ENCODE measurements at regions of chr16 and their contacts with region 1.

Region 1: GRCh38 chr16:7313170-7313569 is 19.5 kb upstream of the RBFOX1 start:
- DNase-seq: no peak
- H3K4me3 ChIP-seq: no peak overlapping the region
- H3K27ac ChIP-seq: no peak overlapping the region
- H3K4me1 ChIP-seq: no peaks in the 10 kb centered on the region
- H3K27me3 ChIP-seq: no peaks in the 10 kb centered on the region
- CTCF ChIP-seq: peak in 2 of 3 experiments; percentile 11 to 50; a peak in 2 of 4 replicates
- EP300 ChIP-seq: no peak
- POLR2A ChIP-seq: no peak
- RAD21 ChIP-seq: peak; percentile 41 to 48

Region 2: GRCh38 chr16:7257016-7257415 is 56.2 kb before region 1 on chr16:
- CTCF ChIA-PET with region 1: no interaction called
- POLR2A ChIA-PET with region 1: no interaction called
- DNase-seq: no peak
- H3K4me3 ChIP-seq: no peak overlapping the region
- H3K27ac ChIP-seq: no peak overlapping the region
- H3K4me1 ChIP-seq: no peaks in the 10 kb centered on the region
- H3K27me3 ChIP-seq: no peaks in the 10 kb centered on the region
- CTCF ChIP-seq: no peak
- EP300 ChIP-seq: no peak
- POLR2A ChIP-seq: no peak
- RAD21 ChIP-seq: no peak

Region 3: DNA sequence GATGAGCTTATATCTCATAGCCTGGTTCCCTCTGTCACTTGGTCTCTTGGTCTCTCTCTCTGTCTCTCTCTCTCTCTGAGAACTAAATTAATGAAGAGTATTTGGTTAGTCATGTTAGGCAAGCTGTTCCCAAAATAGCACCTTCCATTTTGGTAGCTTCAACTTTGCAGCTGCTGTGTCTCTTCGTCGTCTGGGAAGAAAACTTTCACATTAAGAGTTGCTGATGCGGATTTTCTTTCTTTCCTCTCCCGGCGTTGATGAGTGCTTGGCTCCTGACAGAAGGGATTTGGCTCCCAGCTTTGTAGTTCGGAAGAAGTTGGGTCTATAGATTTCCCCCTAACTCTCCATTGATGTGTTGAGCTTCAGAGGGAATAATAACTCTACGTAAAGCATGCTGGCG is 19.4 kb after region 1 on chr16 and contains the start of gene RBFOX1:
- CTCF ChIA-PET with region 1: interaction called, 21 read pairs
- POLR2A ChIA-PET with region 1: no interaction called
- DNase-seq: no peak
- H3K4me3 ChIP-seq: no peak within 1 kb of the TSS
- H3K27ac ChIP-seq: no peak within 1 kb of the TSS
- H3K4me1 ChIP-seq: no peaks in the 10 kb centered on the region
- H3K27me3 ChIP-seq: no peaks in the 10 kb centered on the region
- CTCF ChIP-seq: no peak
- EP300 ChIP-seq: no peak
- POLR2A ChIP-seq: no peak
- RAD21 ChIP-seq: no peak
- total RNA-seq, gene RBFOX1: 2.8 and 3.1 TPM in 2 replicates